Endothelial cell of umbilical vein (primary cell): ENCODE measurements at regions of chr4 and their contacts with region 1.

Region 1: GRCh38 chr4:159400558-159401225 is 297.8 kb downstream of the RAPGEF2 start:
- DNase-seq: no peak
- H3K4me3 ChIP-seq: no peak overlapping the region
- H3K27ac ChIP-seq: no peak overlapping the region
- H3K4me1 ChIP-seq: peaks cover 21% of the 10 kb centered on the region
- H3K27me3 ChIP-seq: no peaks in the 10 kb centered on the region
- CTCF ChIP-seq: no peak
- POLR2A ChIP-seq: no peak

Region 2: DNA sequence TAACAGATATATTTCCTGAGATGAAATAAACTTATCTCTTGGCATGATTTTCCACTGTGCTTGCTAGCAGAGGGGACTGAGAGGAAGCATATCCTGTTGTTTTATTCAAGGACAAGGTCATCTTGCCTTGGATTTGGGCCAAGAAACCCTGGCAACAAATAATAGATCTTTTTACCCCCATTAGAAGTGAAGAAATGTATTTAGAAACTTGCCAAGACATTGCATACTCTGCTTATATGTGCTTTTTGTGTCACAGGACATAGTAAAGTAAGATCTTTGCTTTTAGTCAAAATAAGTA is 127.6 kb before region 1 on chr4:
- CTCF ChIA-PET with region 1: no interaction called
- POLR2A ChIA-PET with region 1: no interaction called
- dilution Hi-C with region 1: no loop called
- intact Hi-C with region 1: loop called (anchors 5 kb)
- DNase-seq: peak; percentile 83
- H3K4me3 ChIP-seq: no peak overlapping the region
- H3K27ac ChIP-seq: peak overlapping the region; percentile 6
- H3K4me1 ChIP-seq: peaks cover 46% of the 10 kb centered on the region
- H3K27me3 ChIP-seq: no peaks in the 10 kb centered on the region
- CTCF ChIP-seq: no peak
- POLR2A ChIP-seq: no peak

Region 3: GRCh38 chr4:159384632-159385031 is 16.1 kb before region 1 on chr4:
- CTCF ChIA-PET with region 1: interaction called, 10 read pairs
- POLR2A ChIA-PET with region 1: no interaction called
- dilution Hi-C with region 1: no loop called
- intact Hi-C with region 1: no loop called
- DNase-seq: no peak
- H3K4me3 ChIP-seq: no peak overlapping the region
- H3K27ac ChIP-seq: no peak overlapping the region
- H3K4me1 ChIP-seq: peaks cover 16% of the 10 kb centered on the region
- H3K27me3 ChIP-seq: no peaks in the 10 kb centered on the region
- CTCF ChIP-seq: no peak
- POLR2A ChIP-seq: no peak